ENCODE measurements at regions of chr1 and their contacts with region 1.

Region 1: GRCh38 chr1:110338886-110339406 is at the start of gene RBM15:
- DNase-seq: peak; percentile 100
- H3K4me3 ChIP-seq: peak within 1 kb of the TSS; percentile 81 to 96
- H3K27ac ChIP-seq: peak within 1 kb of the TSS; percentile 91 to 95
- H3K4me1 ChIP-seq: peaks cover 19 to 32% of the 10 kb centered on the region in 2 donors
- H3K27me3 ChIP-seq: no peaks in the 10 kb centered on the region
- CTCF ChIP-seq: no peak
- total RNA-seq, gene RBM15: 13.6 TPM

Region 2: DNA sequence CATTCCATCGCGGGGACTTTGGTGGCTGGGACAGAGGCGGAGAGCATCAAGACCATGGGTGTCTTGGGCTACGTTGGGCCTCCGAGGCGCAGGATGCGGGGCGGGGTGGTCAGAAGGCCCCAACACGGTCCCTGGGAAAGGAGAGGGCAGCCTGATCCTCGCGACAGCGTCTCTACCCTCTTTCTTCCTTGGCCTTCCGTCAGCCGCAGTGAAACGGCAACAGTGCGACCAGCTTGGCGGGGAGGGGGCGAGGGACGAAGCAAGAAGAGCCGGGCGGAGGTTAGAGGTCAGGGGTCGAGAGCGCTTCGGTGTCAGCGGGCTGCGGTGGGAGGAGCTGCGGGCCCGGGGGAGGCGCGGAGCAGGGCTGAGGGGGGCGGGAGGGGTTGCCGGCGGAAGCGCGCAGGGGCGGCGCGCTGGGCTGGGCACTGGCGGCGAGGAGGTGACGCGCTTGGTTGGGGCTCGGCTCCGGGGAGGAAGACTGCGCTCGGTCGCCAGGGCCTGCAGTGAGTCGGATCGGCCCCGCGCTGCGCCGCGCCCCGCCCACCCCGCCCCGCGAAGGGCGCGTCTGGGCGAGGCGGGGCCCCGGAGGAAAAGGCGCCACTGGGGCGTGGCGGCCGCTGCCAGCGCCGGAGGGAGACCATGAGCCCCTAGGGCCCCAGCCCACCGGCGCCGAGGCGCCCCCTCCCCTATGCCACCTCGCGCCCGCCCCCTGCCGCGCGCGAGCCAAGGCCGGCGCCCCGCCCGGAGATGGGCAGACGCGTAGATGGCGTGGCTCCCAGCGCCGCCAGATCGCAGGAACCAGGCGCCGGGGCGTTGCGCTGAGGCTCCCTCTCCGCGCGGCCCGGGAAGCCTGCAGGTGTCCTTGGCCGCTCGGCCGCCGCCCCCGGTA is 129.0 kb before region 1 on chr1 and contains the start of gene KCNC4:
- intact Hi-C with region 1: loop called (anchors 1 kb)
- DNase-seq: peak; percentile 50 to 95
- H3K4me3 ChIP-seq: peak within 1 kb of the TSS; percentile 89 to 96
- H3K27ac ChIP-seq: peak within 1 kb of the TSS; percentile 89 to 95
- H3K4me1 ChIP-seq: peaks cover 3 to 21% of the 10 kb centered on the region in 2 donors
- H3K27me3 ChIP-seq: no peaks in the 10 kb centered on the region
- CTCF ChIP-seq: no peak
- total RNA-seq, gene KCNC4: 8.4 TPM

Region 3: GRCh38 chr1:110407260-110408210 is 68.6 kb after region 1 on chr1 and contains the start of gene LAMTOR5:
- intact Hi-C with region 1: loop called (anchors 1 kb)
- DNase-seq: peak; percentile 75 to 97
- H3K4me3 ChIP-seq: peak within 1 kb of the TSS; percentile 81 to 93
- H3K27ac ChIP-seq: peak within 1 kb of the TSS; percentile 93 to 96
- H3K4me1 ChIP-seq: peaks cover 9 to 16% of the 10 kb centered on the region in 2 donors
- H3K27me3 ChIP-seq: no peaks in the 10 kb centered on the region
- CTCF ChIP-seq: peak in 2 of 3 experiments; percentile 5 to 15
- total RNA-seq, gene LAMTOR5: 21.7 TPM

Region 4: GRCh38 chr1:110440877-110441276 is 101.9 kb after region 1 on chr1:
- intact Hi-C with region 1: no loop called
- DNase-seq: peak in 1 of 2 donors; percentile 67
- H3K4me3 ChIP-seq: no peak overlapping the region
- H3K27ac ChIP-seq: no peak overlapping the region
- H3K4me1 ChIP-seq: no peaks in the 10 kb centered on the region
- H3K27me3 ChIP-seq: no peaks in the 10 kb centered on the region
- CTCF ChIP-seq: no peak

Region 5: GRCh38 chr1:110605901-110606656 is 267.1 kb after region 1 on chr1 and contains the start of gene KCNA2:
- intact Hi-C with region 1: loop called (anchors 5 kb)
- DNase-seq: peak in 1 of 2 donors; percentile 61
- H3K4me3 ChIP-seq: peak within 1 kb of the TSS; percentile 79 to 90
- H3K27ac ChIP-seq: peak within 1 kb of the TSS; percentile 50 to 63
- H3K4me1 ChIP-seq: peaks cover 6 to 9% of the 10 kb centered on the region in 2 donors
- H3K27me3 ChIP-seq: no peaks in the 10 kb centered on the region
- CTCF ChIP-seq: no peak
- total RNA-seq, gene KCNA2: 9.4 TPM

Region 6: DNA sequence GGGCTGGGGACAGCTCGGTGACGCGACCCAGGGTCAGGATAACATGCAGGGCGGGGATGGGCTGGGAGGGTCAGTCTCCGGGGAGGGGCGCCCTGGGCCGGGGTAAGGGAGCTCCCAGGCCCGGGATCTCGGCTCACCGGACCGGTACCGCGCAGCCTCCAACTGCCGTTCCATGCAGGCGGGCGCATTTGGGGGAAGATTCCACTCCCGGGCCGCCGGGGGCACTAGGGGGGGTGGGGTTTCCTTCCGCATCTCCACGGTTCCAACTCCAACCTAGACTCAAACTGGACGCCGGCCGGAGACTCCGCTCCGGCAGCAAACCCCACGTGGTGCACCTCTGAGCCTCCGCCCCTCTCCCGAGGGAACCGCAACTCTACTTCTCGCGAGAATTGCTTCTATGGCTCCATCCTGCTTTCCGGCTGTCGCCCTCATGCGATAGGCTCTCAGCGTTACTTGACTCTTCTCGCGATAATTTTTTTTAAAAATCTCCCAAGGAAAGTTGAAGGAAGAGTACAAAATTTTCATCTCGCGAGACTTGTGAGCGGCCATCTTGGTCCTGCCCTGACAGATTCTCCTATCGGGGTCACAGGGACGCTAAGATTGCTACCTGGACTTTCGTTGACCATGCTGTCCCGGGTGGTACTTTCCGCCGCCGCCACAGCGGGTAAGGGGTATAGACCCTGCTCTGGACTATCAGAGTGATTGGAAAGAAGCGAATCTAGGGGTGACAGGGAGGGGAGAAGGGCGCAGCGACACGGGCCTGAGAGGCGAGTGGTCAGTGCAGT is 1110.2 kb after region 1 on chr1 and contains the starts of genes ATP5PB and WDR77:
- intact Hi-C with region 1: loop called (anchors 5 kb)
- DNase-seq: peak; percentile 89 to 98
- H3K4me3 ChIP-seq: peak within 1 kb of the TSS; percentile 85 to 96
- H3K27ac ChIP-seq: peak within 1 kb of the TSS; percentile 80 to 84
- H3K4me1 ChIP-seq: peaks cover 13 to 29% of the 10 kb centered on the region in 2 donors
- H3K27me3 ChIP-seq: no peaks in the 10 kb centered on the region
- CTCF ChIP-seq: peak in 1 of 3 experiments; percentile 7
- total RNA-seq, gene ATP5PB: 24.7 TPM
- total RNA-seq, gene WDR77: 31.2 TPM